GM10248 (cell line): ENCODE measurements at regions of chr9 and their contacts with region 1.

Region 1: GRCh38 chr9:37575921-37576721 is at the start of gene FBXO10:
- DNase-seq: peak; percentile 84
- CTCF ChIP-seq: no peak

Region 2: GRCh38 chr9:37480759-37481158 is 95.4 kb before region 1 on chr9:
- CTCF ChIA-PET with region 1: interaction called, 13 read pairs
- POLR2A ChIA-PET with region 1: no interaction called
- DNase-seq: no peak
- CTCF ChIP-seq: no peak

Region 3: DNA sequence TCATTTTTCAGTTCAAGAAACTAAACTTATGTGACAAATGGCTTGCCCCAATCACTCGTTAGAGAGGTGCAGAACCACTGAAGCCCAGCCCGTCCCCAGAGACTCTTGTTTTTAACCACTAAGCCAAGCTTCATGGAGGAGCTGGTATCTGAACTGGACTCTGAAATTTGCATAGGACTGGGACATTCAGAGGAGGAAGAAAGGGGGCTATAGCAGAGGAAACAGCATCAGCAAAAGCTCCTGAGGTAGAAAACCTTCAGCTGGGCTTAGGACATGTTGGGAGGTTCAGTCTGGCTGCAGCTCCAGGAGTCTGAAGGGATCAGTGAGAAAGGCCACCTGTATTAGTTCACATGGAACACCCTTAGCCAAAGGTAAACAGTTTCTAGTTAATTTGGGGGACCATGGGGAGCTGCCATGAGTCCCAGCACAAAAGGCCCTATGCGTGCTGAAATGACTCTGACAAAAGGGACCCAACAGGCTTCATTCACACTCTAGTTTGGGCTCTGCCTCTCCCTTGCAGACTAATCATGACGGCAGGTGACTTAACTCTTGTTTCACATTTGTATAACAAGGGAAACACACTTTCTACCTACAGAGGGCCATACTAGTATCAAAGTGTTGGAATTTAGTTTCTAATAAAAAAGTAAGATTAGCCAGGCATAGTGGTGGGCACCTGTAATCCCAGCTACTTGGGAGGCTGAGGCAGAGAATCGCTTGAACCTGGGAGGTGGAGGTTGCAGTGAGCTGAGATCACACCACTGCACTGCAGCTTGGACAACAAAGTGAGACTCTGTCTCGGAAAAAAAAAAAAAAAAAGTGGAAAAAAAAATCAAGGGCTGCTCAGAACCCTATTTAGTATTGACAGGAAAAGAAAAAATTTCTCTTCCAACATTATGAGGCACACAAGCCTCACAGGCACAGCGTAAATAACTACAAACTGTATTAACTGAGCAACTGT is 10.2 kb before region 1 on chr9:
- CTCF ChIA-PET with region 1: interaction called, 17 read pairs
- POLR2A ChIA-PET with region 1: interaction called, 12 read pairs
- DNase-seq: peak; percentile 55
- CTCF ChIP-seq: no peak

Region 4: GRCh38 chr9:37592108-37592951 is 16.2 kb after region 1 on chr9 and contains the start of gene TOMM5:
- CTCF ChIA-PET with region 1: interaction called, 71 read pairs
- POLR2A ChIA-PET with region 1: interaction called, 4 read pairs
- DNase-seq: peak; percentile 90
- CTCF ChIP-seq: no peak